Activated T-helper 2 cell treated with anti-CD3 and anti-CD28 coated beads, Interferon-gamma antibody, Interleukin-2, Interleukin-4, amounts not matched to agents 10 μg/mL and 5 μg/mL and 100 μg/mL, durations not matched to agents 14 hours and 24 hours and 36 hours (primary cell): ENCODE measurements at regions of chr5 and their contacts with region 1.

Region 1: GRCh38 chr5:77356740-77357139 is 135.4 kb downstream of the WDR41 start:
- DNase-seq: peak; percentile 27
- H3K4me3 Mint-ChIP-seq: no peak overlapping the region
- H3K27ac Mint-ChIP-seq: peak overlapping the region; percentile 16
- H3K4me1 Mint-ChIP-seq: peaks cover 26% of the 10 kb centered on the region
- H3K27me3 Mint-ChIP-seq: no peaks in the 10 kb centered on the region

Region 2: GRCh38 chr5:76386360-76386759 is 970.4 kb before region 1 on chr5:
- intact Hi-C with region 1: no loop called
- DNase-seq: no peak
- H3K4me3 Mint-ChIP-seq: no peak overlapping the region
- H3K27ac Mint-ChIP-seq: no peak overlapping the region
- H3K4me1 Mint-ChIP-seq: peaks cover 28% of the 10 kb centered on the region
- H3K27me3 Mint-ChIP-seq: peaks cover 2% of the 10 kb centered on the region

Region 3: DNA sequence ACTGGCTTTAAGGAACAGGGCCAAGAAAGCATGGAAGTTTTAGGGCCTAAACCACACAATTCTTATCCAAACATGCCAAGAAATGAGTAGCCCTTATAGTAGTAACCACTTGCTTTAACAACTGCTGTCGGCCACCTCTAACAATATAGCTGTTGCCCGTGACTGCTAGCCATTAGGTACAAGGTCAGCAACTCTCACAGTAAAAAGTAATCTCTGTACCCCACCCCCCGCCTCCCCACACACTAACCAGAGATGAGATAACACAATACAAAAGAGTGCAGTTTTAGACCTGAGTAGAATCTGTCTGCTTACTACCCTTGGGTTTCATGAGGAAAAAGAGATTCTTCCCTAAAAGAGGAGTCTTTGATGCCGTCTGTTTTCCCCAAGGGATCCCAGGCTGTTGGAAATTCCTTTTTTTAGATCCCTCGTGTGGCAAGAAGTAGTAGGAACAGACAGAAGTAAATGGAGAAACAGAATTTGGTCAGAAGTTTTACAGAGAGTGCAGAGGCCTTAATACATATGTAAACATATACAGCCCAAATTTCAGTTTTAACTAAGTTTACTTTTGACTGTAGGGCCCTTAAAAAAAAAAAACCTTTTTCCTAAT is 41.0 kb after region 1 on chr5:
- intact Hi-C with region 1: loop called (anchors 1 kb)
- DNase-seq: no peak
- H3K4me3 Mint-ChIP-seq: no peak overlapping the region
- H3K27ac Mint-ChIP-seq: no peak overlapping the region
- H3K4me1 Mint-ChIP-seq: peaks cover 9% of the 10 kb centered on the region
- H3K27me3 Mint-ChIP-seq: peaks cover 10% of the 10 kb centered on the region